ENCODE measurements at regions of chr12 and their contacts with region 1.

Region 1: DNA sequence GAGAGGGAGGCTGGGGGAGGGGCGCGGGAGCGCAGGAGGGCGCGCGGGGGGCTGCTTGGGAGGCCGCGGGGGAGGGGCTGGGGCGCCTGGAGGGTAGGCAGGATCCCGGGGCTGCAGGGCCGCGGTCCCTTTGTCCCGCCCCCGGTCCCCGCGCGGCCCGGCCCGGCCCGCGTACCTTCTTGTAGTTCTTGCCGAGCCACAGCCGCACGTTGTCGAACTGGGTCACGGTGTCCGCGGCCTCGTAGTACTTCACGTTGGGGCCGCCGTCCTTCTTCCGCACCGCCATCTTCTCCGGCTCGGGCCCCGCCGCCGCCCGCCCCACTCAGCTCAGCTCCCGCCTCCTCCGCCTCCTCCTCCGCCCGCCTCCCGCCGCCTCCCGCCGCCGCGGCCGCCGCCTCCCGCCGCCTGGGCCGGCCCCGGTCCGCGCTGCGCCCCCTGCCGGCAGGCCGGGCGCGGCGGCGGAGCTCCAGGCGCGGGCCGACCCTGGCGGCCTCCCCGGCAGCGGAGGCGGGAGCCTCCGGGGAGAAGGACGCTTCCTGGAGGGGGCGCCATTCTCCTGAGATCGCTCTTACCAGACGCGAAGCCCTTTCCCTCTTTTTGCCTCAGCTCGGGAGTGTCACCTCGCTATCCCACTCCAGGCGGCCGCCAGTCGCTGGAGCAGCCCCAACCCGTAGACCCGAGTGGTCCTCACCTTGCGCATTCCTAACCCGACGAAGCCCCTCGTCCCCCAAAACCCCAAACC is at the start of gene SMARCC2:
- DNase-seq: peak; percentile 92
- H3K4me3 Mint-ChIP-seq: peak within 1 kb of the TSS; percentile 87
- H3K27ac Mint-ChIP-seq: peak within 1 kb of the TSS; percentile 95
- H3K4me1 Mint-ChIP-seq: peaks cover 35% of the 10 kb centered on the region
- H3K27me3 Mint-ChIP-seq: no peaks in the 10 kb centered on the region
- total RNA-seq, gene SMARCC2: 96.4 to 103 TPM

Region 2: DNA sequence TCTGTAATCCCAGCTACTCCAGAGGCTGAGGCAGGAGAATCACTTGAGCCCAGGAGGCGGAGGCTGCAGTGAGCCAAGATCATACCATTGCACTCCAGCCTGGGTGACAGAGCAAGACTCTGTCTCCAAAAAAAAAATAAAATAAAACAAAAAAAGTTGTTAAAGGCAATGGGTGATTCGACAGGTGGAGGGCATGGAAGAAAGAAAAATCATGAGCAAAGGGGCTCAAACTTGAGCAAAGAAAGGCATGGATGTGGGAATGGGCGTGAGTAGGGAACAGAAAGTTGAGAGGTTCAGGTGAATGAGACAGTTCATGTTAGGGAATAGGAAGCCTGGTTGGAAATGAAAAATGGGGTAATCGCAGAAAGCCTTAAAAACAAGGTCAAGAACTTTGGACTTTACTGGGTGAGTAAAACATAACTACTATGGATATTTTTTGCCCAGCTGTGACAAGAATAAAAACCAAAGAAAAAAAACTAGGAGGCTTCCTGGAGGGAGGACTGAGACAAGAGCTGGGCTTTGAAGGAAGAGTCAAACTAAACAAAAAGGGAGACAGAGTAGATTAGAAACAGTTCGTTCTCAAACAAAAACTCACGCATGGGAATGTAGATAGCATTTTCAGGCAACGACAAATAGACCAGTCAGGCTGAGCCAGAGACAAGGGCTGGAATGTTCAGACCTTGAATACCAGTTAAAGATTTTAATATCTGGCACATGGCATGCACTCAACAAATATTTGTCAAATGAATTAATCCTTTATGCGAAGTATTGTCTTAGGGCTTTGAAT is 280.4 kb before region 1 on chr12:
- CTCF ChIA-PET with region 1: no interaction called
- POLR2A ChIA-PET with region 1: no interaction called
- intact Hi-C with region 1: no loop called
- DNase-seq: no peak
- H3K4me3 Mint-ChIP-seq: no peak overlapping the region
- H3K27ac Mint-ChIP-seq: no peak overlapping the region
- H3K4me1 Mint-ChIP-seq: peaks cover 17% of the 10 kb centered on the region
- H3K27me3 Mint-ChIP-seq: no peaks in the 10 kb centered on the region

Region 3: DNA sequence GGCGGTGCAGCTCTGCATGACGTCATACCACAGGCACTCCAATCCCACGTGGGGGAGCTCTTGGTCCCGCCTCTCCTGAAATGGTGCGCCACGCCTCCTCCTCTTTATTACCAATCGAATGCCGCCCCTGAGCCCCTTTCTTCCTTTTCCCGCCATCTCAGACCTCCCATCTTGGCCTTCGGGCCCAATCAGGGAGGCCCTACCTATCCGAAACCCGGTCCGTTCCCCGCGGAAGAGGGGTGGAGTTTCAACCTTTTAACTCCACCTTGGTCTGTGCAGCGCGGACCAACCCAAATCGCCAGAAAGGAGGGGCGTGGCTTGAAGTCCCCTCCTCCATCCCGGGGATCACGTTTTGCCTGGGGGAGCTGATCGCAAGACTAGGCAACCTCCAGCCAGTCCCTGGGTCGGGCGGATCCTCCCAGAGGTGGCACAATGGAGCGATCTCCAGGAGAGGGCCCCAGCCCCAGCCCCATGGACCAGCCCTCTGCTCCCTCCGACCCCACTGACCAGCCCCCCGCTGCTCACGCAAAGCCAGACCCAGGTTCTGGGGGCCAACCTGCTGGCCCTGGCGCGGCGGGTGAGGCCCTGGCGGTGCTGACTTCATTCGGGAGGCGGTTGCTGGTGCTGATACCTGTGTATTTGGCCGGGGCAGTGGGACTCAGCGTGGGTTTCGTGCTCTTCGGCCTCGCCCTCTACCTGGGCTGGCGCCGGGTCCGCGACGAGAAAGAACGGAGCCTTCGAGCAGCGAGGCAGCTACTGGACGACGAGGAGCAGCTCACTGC is 61.3 kb before region 1 on chr12 and contains the start of gene ESYT1:
- CTCF ChIA-PET with region 1: interaction called, 118 read pairs
- POLR2A ChIA-PET with region 1: interaction called, 22 read pairs
- intact Hi-C with region 1: loop called (anchors 1 kb)
- DNase-seq: peak; percentile 99
- H3K4me3 Mint-ChIP-seq: peak within 1 kb of the TSS; percentile 97
- H3K27ac Mint-ChIP-seq: peak within 1 kb of the TSS; percentile 93
- H3K4me1 Mint-ChIP-seq: peaks cover 60% of the 10 kb centered on the region
- H3K27me3 Mint-ChIP-seq: no peaks in the 10 kb centered on the region
- total RNA-seq, gene ESYT1: 142 to 146 TPM

Region 4: GRCh38 chr12:56172831-56173230 is 16.5 kb before region 1 on chr12:
- CTCF ChIA-PET with region 1: interaction called, 12 read pairs
- POLR2A ChIA-PET with region 1: interaction called, 7 read pairs
- intact Hi-C with region 1: no loop called
- DNase-seq: no peak
- H3K4me3 Mint-ChIP-seq: no peak overlapping the region
- H3K27ac Mint-ChIP-seq: no peak overlapping the region
- H3K4me1 Mint-ChIP-seq: no peaks in the 10 kb centered on the region
- H3K27me3 Mint-ChIP-seq: no peaks in the 10 kb centered on the region

Region 5: DNA sequence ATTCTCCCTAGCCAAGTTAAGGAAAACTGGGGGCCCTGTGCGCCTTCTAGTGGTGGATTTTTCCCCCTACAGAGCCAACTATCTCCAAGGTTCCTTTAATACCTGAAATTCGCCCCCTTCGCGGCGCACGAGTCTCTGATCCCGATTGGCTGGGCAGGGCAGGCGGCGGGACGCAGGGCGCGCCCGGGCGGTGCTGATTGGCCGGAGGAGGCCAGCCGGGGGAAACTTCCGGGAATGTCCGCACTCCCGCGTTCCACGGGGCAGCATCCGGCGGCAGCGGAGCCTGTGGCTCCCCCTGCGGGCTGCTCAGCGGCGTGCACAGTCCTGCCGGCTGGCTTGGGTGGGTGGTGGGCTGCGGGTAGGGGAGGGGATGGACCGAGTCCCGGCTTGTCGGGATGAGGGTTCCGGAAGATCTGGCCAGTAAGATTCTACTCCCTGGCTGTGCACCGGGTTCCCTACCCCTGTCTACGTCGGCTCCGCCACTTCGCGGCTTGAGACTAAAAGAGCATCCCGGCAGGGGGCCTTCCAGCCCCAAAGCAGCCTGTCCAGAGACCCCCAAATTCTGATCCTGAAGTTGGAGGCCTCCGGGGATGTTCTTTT is 34.9 kb after region 1 on chr12 and contains the start of gene NABP2:
- CTCF ChIA-PET with region 1: interaction called, 50 read pairs
- POLR2A ChIA-PET with region 1: interaction called, 17 read pairs
- intact Hi-C with region 1: loop called (anchors 1 kb)
- DNase-seq: peak; percentile 97
- H3K4me3 Mint-ChIP-seq: peak within 1 kb of the TSS; percentile 96
- H3K27ac Mint-ChIP-seq: peak within 1 kb of the TSS; percentile 80
- H3K4me1 Mint-ChIP-seq: peaks cover 33% of the 10 kb centered on the region
- H3K27me3 Mint-ChIP-seq: no peaks in the 10 kb centered on the region
- total RNA-seq, gene NABP2: 62.0 to 62.2 TPM

Region 6: GRCh38 chr12:56299853-56300643 is 110.7 kb after region 1 on chr12 and contains the start of gene CS:
- CTCF ChIA-PET with region 1: no interaction called
- POLR2A ChIA-PET with region 1: interaction called, 5 read pairs
- intact Hi-C with region 1: loop called (anchors 2 kb)
- DNase-seq: peak; percentile 99
- H3K4me3 Mint-ChIP-seq: peak within 1 kb of the TSS; percentile 98
- H3K27ac Mint-ChIP-seq: peak within 1 kb of the TSS; percentile 98
- H3K4me1 Mint-ChIP-seq: peaks cover 46% of the 10 kb centered on the region
- H3K27me3 Mint-ChIP-seq: no peaks in the 10 kb centered on the region
- total RNA-seq, gene CS: 304 to 309 TPM

Measured in activated CD4-positive, alpha-beta memory T cell treated with anti-CD3 and anti-CD28 coated beads for 36 hours (primary cell).